ENCODE measurements at regions of chr19 and their contacts with region 1.

Region 1: DNA sequence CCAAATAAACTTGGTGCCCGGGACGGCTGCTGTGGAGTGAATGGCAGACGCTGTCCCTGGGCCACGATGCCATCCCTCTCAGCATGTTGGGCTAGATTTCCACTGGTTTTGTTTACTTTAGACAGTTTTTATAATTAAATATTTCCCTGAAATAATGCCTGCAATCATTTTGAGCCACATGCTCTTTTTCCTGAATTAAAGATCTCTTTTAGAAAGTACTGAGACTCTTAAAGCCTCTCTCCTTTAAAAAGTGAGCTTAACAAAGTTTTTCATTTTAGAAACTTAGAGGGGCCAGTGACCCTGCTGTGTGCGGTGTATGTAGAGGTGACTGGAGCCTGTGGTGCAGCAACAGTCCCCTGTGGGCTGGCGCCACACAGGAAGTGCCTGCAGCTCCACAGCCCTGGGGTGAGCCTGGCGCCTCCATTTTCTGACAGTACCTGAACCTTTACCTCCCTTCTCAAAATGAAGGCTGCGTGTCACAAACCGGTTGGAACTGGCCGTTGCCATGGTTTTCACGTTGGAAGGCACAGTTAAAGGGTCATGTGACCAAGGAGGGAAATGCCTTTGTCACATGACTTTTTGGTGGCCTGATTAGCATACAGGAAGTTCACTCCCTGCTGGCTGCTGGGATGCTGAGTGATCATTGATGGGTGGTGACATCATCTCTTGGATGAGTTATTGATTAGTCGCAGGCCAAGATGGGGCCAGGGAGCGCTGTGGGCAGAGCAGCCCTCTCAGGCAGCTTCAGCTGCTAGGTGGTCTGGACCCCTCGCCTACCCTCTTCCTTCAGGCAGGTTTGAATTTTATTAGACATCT is 26.3 kb downstream of the TSSK6 start:
- DNase-seq: peak; percentile 82 to 96 (median 91)
- H3K4me3 ChIP-seq: peak overlapping the region; percentile 40
- H3K4me3 Mint-ChIP-seq: peak overlapping the region; percentile 62 to 88 (median 76)
- H3K27ac ChIP-seq: peak overlapping the region; percentile 89
- H3K27ac Mint-ChIP-seq: peak overlapping the region; percentile 96 to 100 (median 99)
- H3K4me1 ChIP-seq: peaks cover 61% of the 10 kb centered on the region
- H3K4me1 Mint-ChIP-seq: peaks cover 36 to 65% (median 36%) of the 10 kb centered on the region in 3 donors
- H3K27me3 ChIP-seq: no peaks in the 10 kb centered on the region
- H3K27me3 Mint-ChIP-seq: peaks cover 0 to 3% of the 10 kb centered on the region in 2 donors

Region 2: DNA sequence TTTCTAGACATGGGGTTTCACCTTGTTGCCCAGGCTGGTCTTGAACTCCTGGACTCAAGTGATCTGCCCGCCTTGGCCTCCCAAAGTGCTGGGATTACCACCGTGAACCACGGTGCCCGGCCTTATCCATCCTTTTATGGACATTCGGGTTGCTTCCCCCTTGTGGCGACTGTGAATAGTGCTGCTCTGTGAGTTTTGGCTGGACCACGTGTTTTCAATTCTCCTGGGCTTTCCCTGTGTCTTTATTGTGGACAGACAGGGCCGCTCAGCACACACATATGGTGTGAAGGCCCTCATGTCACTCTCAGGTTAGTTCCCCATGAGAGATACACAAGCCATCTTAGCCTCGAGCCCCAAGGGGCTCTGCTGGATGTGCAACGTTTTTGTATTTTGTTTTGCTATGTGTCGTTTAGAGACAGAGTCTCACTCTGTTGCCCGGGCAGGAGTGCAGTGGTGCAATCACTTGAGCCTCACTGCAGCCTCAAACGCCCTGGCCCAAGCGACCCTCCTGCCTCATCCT is 127.9 kb before region 1 on chr19:
- CTCF ChIA-PET with region 1: interaction called, 166 read pairs
- POLR2A ChIA-PET with region 1: interaction called, 26 read pairs
- DNase-seq: peak; percentile 50 to 75 (median 62)
- H3K4me3 ChIP-seq: no peak overlapping the region
- H3K4me3 Mint-ChIP-seq: peak overlapping the region in 6 of 7 donors; percentile 32 to 69 (median 60)
- H3K27ac ChIP-seq: no peak overlapping the region
- H3K27ac Mint-ChIP-seq: peak overlapping the region in 6 of 8 donors; percentile 51 to 94 (median 70)
- H3K4me1 ChIP-seq: peaks cover 33% of the 10 kb centered on the region
- H3K4me1 Mint-ChIP-seq: peaks cover 24 to 43% (median 30%) of the 10 kb centered on the region in 3 donors
- H3K27me3 ChIP-seq: no peaks in the 10 kb centered on the region
- H3K27me3 Mint-ChIP-seq: no peaks in the 10 kb centered on the region

Region 3: DNA sequence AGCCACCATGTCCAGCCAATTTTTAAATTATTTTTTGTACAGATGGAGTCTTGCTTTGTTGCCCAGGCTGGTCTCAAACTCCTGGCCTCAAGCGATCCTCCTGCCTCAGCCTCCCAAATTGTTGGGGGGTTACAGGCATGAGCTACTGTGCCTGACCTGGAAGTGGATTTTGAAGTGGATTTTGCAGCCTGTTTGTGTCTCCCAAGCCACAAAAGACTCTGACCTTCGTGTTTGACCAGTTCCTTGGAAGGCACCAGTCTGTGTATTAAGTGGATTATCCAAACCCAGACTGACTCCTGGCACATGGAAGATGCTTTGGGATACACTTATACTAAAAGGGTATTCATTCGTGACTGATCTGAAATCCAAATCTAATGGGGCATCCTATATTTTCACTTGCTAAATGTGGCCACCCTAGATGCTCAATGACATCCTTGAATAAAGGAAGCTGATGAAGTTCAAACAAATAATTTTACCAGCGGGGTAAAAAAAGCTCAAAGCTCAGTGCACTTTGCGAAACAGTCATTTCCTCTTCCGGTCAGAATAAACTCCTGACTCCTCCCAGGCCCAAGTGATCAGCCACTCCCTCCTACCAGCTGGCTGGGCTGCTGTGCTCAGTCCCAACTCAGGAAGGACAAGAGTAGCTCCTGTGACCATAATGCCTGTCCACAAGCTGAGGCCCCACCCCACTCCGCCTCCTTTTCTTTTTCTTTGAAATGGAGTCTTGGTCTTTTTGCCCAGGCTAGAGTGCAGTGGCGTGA is 116.2 kb before region 1 on chr19:
- CTCF ChIA-PET with region 1: interaction called, 166 read pairs
- POLR2A ChIA-PET with region 1: interaction called, 7 read pairs
- DNase-seq: peak in 3 of 5 donors; percentile 27 to 64 (median 32)
- H3K4me3 ChIP-seq: peak overlapping the region; percentile 40
- H3K4me3 Mint-ChIP-seq: peak overlapping the region in 6 of 7 donors; percentile 12 to 68 (median 53)
- H3K27ac ChIP-seq: peak overlapping the region; percentile 64
- H3K27ac Mint-ChIP-seq: peak overlapping the region; percentile 61 to 95 (median 86)
- H3K4me1 ChIP-seq: peaks cover 13% of the 10 kb centered on the region
- H3K4me1 Mint-ChIP-seq: peaks cover 9% of the 10 kb centered on the region in 3 donors
- H3K27me3 ChIP-seq: no peaks in the 10 kb centered on the region
- H3K27me3 Mint-ChIP-seq: no peaks in the 10 kb centered on the region

Region 4: GRCh38 chr19:19404879-19405860 is 83.9 kb before region 1 on chr19 and contains the start of gene GATAD2A:
- CTCF ChIA-PET with region 1: interaction called, 61 read pairs
- POLR2A ChIA-PET with region 1: interaction called, 19 read pairs
- DNase-seq: peak; percentile 88 to 95 (median 91)
- H3K4me3 ChIP-seq: peak within 1 kb of the TSS; percentile 85
- H3K4me3 Mint-ChIP-seq: peak within 1 kb of the TSS; percentile 87 to 97 (median 91)
- H3K27ac ChIP-seq: peak within 1 kb of the TSS; percentile 75
- H3K27ac Mint-ChIP-seq: peak within 1 kb of the TSS; percentile 87 to 99 (median 94)
- H3K4me1 ChIP-seq: peaks cover 46% of the 10 kb centered on the region
- H3K4me1 Mint-ChIP-seq: peaks cover 53 to 72% (median 61%) of the 10 kb centered on the region in 3 donors
- H3K27me3 ChIP-seq: no peaks in the 10 kb centered on the region
- H3K27me3 Mint-ChIP-seq: peaks cover 0 to 1% of the 10 kb centered on the region in 2 donors
- total RNA-seq, gene GATAD2A: 176 to 182 TPM

Region 5: GRCh38 chr19:19502808-19503602 is 13.9 kb after region 1 on chr19:
- CTCF ChIA-PET with region 1: interaction called, 12 read pairs
- POLR2A ChIA-PET with region 1: interaction called, 4 read pairs
- DNase-seq: no peak
- H3K4me3 ChIP-seq: no peak overlapping the region
- H3K4me3 Mint-ChIP-seq: no peak overlapping the region
- H3K27ac ChIP-seq: no peak overlapping the region
- H3K27ac Mint-ChIP-seq: peak overlapping the region in 5 of 8 donors; percentile 7 to 84 (median 42)
- H3K4me1 ChIP-seq: no peaks in the 10 kb centered on the region
- H3K4me1 Mint-ChIP-seq: no peaks in the 10 kb centered on the region
- H3K27me3 ChIP-seq: no peaks in the 10 kb centered on the region
- H3K27me3 Mint-ChIP-seq: peaks cover 0 to 3% of the 10 kb centered on the region in 2 donors